CD8-positive, alpha-beta T cell (primary cell): ENCODE measurements at regions of chr4 and their contacts with region 1.

Region 1: DNA sequence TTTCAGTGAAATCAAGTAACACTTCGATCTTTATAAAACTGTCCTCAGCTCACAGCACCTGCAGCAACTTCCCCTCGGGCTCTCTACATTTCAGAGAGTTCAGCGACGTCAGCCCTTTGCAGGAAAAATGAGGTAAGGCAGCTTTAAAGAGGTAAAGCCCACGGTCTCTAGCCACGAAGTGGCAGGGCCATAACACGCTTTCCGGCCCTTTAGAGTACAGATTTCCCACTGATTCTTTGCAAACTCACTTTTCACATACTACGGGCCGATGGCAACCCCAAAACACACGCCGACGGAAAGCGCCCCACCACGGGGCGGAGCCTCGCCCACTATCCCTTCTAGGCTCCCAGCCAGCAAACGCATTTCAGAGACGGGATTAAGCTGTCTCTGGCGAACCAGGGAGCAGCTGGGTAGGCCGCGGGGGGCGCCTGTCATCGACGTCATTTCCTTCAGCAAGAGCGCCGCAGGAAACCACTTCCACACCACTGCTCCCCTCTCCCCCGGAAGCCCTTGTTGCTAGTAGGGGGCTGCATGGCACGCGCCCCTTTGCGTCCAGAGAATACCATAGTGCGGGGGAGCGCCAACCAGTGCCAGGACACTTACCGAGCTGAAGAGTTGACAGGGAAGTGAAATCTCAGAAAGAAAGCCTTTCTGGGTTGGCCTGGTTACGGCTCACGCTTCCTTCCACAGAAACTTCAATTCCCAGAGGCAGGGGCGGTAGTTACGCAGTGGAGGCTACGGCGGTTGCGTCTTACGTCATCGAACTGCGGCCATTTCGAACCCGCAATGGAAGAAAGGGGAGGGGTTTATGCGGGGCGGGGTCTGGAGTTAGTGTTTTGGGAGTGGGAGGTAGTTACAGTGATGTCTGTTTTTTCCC is at the start of gene TRMT10A:
- DNase-seq: peak; percentile 87 to 98 (median 95)
- ATAC-seq: peak; percentile 79
- H3K4me3 ChIP-seq: peak within 1 kb of the TSS; percentile 71 to 83
- H3K4me3 Mint-ChIP-seq: peak within 1 kb of the TSS; percentile 94
- H3K27ac ChIP-seq: peak within 1 kb of the TSS; percentile 92 to 96
- H3K27ac Mint-ChIP-seq: peak within 1 kb of the TSS; percentile 99
- H3K4me1 ChIP-seq: no peaks in the 10 kb centered on the region
- H3K4me1 Mint-ChIP-seq: peaks cover 19% of the 10 kb centered on the region
- H3K27me3 ChIP-seq: no peaks in the 10 kb centered on the region
- H3K27me3 Mint-ChIP-seq: peaks cover 19% of the 10 kb centered on the region
- CTCF ChIP-seq: no peak
- total RNA-seq, gene TRMT10A: 0.90 to 1.5 TPM

Region 2: DNA sequence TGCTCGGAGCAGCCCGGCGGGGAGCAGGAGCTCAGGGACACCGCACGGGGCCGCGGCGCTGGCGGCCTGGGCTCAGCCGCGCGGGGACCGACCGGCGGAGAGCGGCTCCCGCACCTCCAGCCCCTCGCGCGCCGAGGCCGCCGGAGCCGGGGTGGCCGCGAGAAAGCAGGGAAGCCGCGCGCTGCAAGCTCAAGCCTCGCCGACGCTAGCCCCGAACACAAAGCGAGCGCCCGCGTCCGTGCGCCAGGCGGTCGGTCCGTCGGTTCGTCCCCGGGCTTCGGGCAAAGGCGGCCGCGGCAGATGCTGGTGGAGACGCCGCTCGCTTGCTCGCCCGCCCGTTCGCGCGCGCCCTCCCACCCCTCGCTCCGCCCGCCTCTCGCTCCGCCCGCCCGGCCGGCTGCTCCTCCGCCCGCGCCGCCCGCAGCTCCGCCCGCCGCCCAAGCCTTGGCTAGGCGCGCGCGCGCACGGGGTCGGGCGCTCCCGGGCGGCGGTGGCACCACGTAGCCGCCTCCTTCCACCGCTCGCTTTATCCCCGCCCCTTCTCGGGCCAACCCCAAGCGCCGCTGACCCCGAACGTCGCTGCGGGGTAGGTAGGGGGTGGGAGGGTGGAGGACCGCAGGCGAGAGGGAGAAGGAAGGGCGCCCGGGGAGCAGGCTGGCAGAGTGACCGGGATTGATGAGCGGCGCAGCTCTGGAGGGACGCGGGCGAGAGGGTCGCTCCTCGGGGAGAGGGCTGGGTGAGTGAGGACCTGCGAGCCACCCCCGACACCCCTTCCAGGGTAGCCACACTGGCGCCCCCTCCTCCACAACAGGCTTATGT is 905.1 kb before region 1 on chr4 and contains the start of gene TSPAN5:
- CTCF ChIA-PET with region 1: no interaction called
- POLR2A ChIA-PET with region 1: no interaction called
- intact Hi-C with region 1: loop called (anchors 5 to 10 kb)
- DNase-seq: peak; percentile 49 to 90 (median 82)
- ATAC-seq: peak; percentile 64
- H3K4me3 ChIP-seq: peak within 1 kb of the TSS; percentile 81 to 86
- H3K4me3 Mint-ChIP-seq: peak within 1 kb of the TSS; percentile 97
- H3K27ac ChIP-seq: peak within 1 kb of the TSS; percentile 14 to 60
- H3K27ac Mint-ChIP-seq: peak within 1 kb of the TSS; percentile 88
- H3K4me1 ChIP-seq: peaks cover 56% of the 10 kb centered on the region
- H3K4me1 Mint-ChIP-seq: peaks cover 80% of the 10 kb centered on the region
- H3K27me3 ChIP-seq: no peaks in the 10 kb centered on the region
- H3K27me3 Mint-ChIP-seq: no peaks in the 10 kb centered on the region
- CTCF ChIP-seq: no peak
- total RNA-seq, gene TSPAN5: 1.6 to 1.9 TPM

Region 3: GRCh38 chr4:99473131-99473530 is 90.4 kb before region 1 on chr4:
- CTCF ChIA-PET with region 1: no interaction called
- POLR2A ChIA-PET with region 1: no interaction called
- intact Hi-C with region 1: loop called in 1 of 2 experiments (anchors 5 kb)
- DNase-seq: no peak
- ATAC-seq: no peak
- H3K4me3 ChIP-seq: no peak overlapping the region
- H3K4me3 Mint-ChIP-seq: no peak overlapping the region
- H3K27ac ChIP-seq: no peak overlapping the region
- H3K27ac Mint-ChIP-seq: no peak overlapping the region
- H3K4me1 ChIP-seq: no peaks in the 10 kb centered on the region
- H3K4me1 Mint-ChIP-seq: no peaks in the 10 kb centered on the region
- H3K27me3 ChIP-seq: no peaks in the 10 kb centered on the region
- H3K27me3 Mint-ChIP-seq: no peaks in the 10 kb centered on the region
- CTCF ChIP-seq: no peak

Region 4: DNA sequence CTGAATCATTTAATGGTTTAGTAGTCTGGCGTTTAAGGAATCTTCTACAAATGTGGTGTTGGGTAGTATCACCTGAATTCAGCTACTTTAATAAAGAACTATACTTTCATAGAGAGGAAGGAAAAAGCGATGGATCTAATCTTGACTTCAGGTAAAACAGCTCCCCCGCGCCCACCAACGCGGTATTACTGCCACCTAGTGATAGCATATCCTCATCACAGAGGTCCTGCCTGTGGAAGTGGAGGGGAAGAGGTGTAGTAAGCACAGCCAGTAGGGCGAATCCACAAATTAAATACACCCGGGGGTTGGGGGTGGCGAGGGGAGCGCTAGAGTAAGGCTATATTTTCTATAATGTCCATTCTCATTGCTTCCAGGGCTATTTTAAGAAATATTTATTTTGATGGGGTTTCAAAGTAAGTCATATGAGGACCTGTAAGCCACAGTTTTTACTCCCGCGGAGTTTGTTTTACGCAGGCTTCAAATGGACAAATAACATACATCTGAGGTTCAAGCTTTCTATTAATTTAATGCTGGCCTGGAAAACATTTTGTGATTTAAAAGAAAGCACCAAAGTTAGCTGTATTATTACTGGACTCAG is 244.8 kb after region 1 on chr4:
- CTCF ChIA-PET with region 1: interaction called, 20 read pairs
- POLR2A ChIA-PET with region 1: no interaction called
- intact Hi-C with region 1: loop called (anchors 1 kb)
- DNase-seq: peak; percentile 46 to 80 (median 69)
- ATAC-seq: peak; percentile 97
- H3K4me3 ChIP-seq: no peak overlapping the region
- H3K4me3 Mint-ChIP-seq: no peak overlapping the region
- H3K27ac ChIP-seq: no peak overlapping the region
- H3K27ac Mint-ChIP-seq: no peak overlapping the region
- H3K4me1 ChIP-seq: no peaks in the 10 kb centered on the region
- H3K4me1 Mint-ChIP-seq: peaks cover 4% of the 10 kb centered on the region
- H3K27me3 ChIP-seq: no peaks in the 10 kb centered on the region
- H3K27me3 Mint-ChIP-seq: peaks cover 14% of the 10 kb centered on the region
- CTCF ChIP-seq: peak; percentile 93

Region 5: DNA sequence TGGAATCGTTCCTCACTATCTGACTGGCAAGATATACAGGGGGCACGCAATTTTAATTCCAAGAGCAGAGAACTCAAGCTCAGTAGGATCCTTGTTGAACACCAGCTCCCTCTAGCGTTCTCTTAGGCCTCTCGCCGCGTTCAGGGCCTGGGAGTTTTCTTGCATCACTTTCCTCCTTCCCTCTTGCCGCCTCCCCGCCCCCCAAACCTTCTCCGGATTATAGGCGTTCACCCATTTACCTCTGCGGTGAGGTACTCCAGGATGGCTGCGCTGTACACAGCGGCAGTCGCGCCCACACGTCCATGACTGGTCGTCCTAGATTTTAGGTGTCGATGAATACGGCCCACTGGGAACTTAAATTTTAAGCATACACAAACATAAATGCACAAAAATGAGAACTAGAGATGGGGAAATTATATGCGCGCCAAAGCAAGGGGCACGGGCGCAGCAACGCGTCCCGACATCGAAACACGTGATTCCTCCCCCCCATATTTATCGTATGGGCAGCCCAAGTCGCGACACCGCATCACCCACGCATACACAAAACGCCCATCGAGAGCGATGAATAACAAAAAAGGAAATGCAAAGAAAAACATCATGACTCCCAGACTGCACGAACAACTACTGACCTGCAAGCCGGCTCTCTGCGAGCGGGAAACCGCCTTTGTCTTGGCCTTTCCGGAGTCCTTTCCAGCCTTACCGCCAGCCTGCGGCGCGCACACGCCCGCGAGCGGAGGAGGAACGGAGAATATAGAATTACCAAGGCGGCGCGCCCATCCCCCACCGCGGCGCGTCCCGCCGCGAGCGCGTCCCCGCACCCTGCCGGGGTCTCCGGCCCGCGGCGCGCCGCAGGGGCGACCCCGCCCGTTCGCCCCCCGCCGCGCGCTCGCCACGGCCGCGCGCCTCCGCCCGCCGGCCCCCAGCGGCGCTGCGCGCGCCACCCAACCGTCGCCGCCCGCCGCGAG is 385.8 kb after region 1 on chr4:
- CTCF ChIA-PET with region 1: interaction called, 11 read pairs
- POLR2A ChIA-PET with region 1: interaction called, 14 read pairs
- intact Hi-C with region 1: loop called (anchors 1 kb)
- DNase-seq: peak; percentile 67 to 95 (median 88)
- ATAC-seq: peak; percentile 32
- H3K4me3 ChIP-seq: peak overlapping the region; percentile 89 to 97
- H3K4me3 Mint-ChIP-seq: no peak overlapping the region
- H3K27ac ChIP-seq: peak overlapping the region; percentile 85 to 97
- H3K27ac Mint-ChIP-seq: no peak overlapping the region
- H3K4me1 ChIP-seq: peaks cover 37% of the 10 kb centered on the region
- H3K4me1 Mint-ChIP-seq: peaks cover 35% of the 10 kb centered on the region
- H3K27me3 ChIP-seq: no peaks in the 10 kb centered on the region
- H3K27me3 Mint-ChIP-seq: no peaks in the 10 kb centered on the region
- CTCF ChIP-seq: peak; percentile 58

Region 6: GRCh38 chr4:101020956-101021355 is 1457.4 kb after region 1 on chr4:
- CTCF ChIA-PET with region 1: no interaction called
- POLR2A ChIA-PET with region 1: no interaction called
- intact Hi-C with region 1: loop called in 1 of 2 experiments (anchors 5 kb)
- DNase-seq: peak in 2 of 9 experiments; percentile 59 to 73
- ATAC-seq: peak; percentile 72
- H3K4me3 ChIP-seq: no peak overlapping the region
- H3K4me3 Mint-ChIP-seq: peak overlapping the region; percentile 47
- H3K27ac ChIP-seq: peak overlapping the region; percentile 15 to 56
- H3K27ac Mint-ChIP-seq: peak overlapping the region; percentile 90
- H3K4me1 ChIP-seq: peaks cover 29% of the 10 kb centered on the region
- H3K4me1 Mint-ChIP-seq: peaks cover 35% of the 10 kb centered on the region
- H3K27me3 ChIP-seq: no peaks in the 10 kb centered on the region
- H3K27me3 Mint-ChIP-seq: no peaks in the 10 kb centered on the region
- CTCF ChIP-seq: no peak